T-cell (primary cell): ENCODE measurements at regions of chrX and their contacts with region 1.

Region 1: DNA sequence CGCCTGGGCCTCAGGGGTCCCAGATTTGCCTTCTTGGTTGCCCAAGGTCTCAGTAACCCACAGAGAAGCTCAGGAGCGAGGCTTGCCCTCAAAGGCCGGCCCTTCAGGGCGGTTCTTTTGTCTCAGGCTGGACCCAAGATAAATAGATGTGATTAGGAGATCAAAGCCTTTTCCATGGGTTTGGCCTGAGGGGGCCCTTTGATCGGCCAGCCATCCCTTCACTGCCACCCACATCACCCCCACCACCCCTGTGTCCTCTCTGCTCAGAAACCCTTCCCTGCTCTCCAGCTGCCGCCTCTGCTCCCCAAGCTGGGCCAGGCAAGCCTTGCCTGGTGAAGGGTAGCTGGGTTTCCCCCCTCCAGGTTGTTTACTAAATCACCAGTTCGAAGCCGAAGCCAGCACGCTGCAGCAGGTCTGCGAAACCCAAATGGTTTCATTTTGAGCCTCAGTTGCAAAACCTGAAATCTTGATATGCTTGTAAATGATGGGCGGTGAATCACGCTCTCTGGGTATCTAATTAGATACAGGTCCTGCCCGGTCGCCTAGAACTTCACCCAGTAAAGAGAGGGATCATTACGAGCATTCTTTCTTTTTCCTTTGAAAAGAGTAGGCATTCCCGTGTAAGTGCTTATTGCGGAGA is 202.6 kb upstream of the BCOR start:
- DNase-seq: peak in 1 of 35 experiments; percentile 8
- ATAC-seq: no peak
- H3K4me3 ChIP-seq: no peak overlapping the region
- H3K4me3 Mint-ChIP-seq: peak overlapping the region in 1 of 3 donors; percentile 37
- H3K27ac ChIP-seq: no peak overlapping the region
- H3K27ac Mint-ChIP-seq: peak overlapping the region in 1 of 2 donors; percentile 11
- H3K4me1 ChIP-seq: peaks cover 2 to 20% of the 10 kb centered on the region in 2 experiments
- H3K4me1 Mint-ChIP-seq: peaks cover 0 to 22% (median 11%) of the 10 kb centered on the region in 3 donors
- H3K27me3 ChIP-seq: peaks cover 0 to 9% of the 10 kb centered on the region in 2 experiments
- H3K27me3 Mint-ChIP-seq: peaks cover 0 to 43% of the 10 kb centered on the region in 2 donors

Region 2: GRCh38 chrX:39309018-39309635 is 991.3 kb before region 1 on chrX:
- CTCF ChIA-PET with region 1: no interaction called
- POLR2A ChIA-PET with region 1: interaction called in 1 of 2 experiments, 13 read pairs
- DNase-seq: peak in 24 of 35 experiments; percentile 3 to 66 (median 27)
- ATAC-seq: peak; percentile 32 to 85 (median 46)
- H3K4me3 ChIP-seq: no peak overlapping the region
- H3K4me3 Mint-ChIP-seq: peak overlapping the region in 1 of 3 donors; percentile 72
- H3K27ac ChIP-seq: peak overlapping the region; percentile 93
- H3K27ac Mint-ChIP-seq: peak overlapping the region; percentile 89 to 100
- H3K4me1 ChIP-seq: peaks cover 20 to 48% of the 10 kb centered on the region in 2 experiments
- H3K4me1 Mint-ChIP-seq: peaks cover 66 to 79% (median 76%) of the 10 kb centered on the region in 3 donors
- H3K27me3 ChIP-seq: no peaks in the 10 kb centered on the region
- H3K27me3 Mint-ChIP-seq: peaks cover 0 to 12% of the 10 kb centered on the region in 2 donors

Region 3: DNA sequence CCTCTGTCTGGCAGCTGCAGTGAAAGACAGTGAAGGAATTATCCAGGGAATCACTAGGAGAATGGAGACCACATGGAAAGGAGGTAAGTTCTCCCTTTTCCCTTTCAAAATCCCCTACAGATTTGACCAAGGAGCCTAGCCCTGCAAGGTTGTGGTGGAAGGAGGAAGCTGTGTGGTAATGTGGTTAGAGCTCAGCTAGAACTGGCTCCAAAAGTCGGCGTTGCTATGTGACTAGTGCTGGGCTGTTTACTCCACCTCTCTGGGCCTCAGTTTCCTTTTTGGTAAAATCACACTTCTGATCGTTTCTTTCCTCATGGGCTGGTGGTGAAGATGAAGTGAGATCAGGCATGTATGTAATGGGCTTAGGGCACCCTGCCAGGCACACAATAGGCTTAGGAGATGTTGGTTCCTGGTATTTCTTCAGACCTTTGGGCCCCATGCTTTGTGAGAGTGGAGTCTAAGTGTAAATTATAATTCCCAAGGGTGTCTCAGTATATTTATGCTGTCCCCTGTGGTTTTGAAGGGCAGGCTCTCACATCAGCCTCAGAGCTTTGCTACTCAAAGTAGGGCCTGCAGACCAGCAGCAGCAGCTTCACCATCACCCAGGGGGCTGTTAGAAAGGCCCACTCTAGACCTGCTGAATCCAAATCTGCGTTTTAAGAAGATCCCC is 18.9 kb before region 1 on chrX:
- CTCF ChIA-PET with region 1: no interaction called
- POLR2A ChIA-PET with region 1: no interaction called
- DNase-seq: peak in 5 of 35 experiments; percentile 2 to 53 (median 10)
- ATAC-seq: peak in 2 of 4 experiments; percentile 43 to 62
- H3K4me3 ChIP-seq: no peak overlapping the region
- H3K4me3 Mint-ChIP-seq: peak overlapping the region in 1 of 3 donors; percentile 9
- H3K27ac ChIP-seq: no peak overlapping the region
- H3K27ac Mint-ChIP-seq: no peak overlapping the region
- H3K4me1 ChIP-seq: peaks cover 4 to 37% of the 10 kb centered on the region in 2 experiments
- H3K4me1 Mint-ChIP-seq: peaks cover 20 to 40% (median 31%) of the 10 kb centered on the region in 3 donors
- H3K27me3 ChIP-seq: no peaks in the 10 kb centered on the region
- H3K27me3 Mint-ChIP-seq: peaks cover 0 to 11% of the 10 kb centered on the region in 2 donors

Region 4: GRCh38 chrX:40318801-40319200 is 18.4 kb after region 1 on chrX:
- CTCF ChIA-PET with region 1: no interaction called
- POLR2A ChIA-PET with region 1: no interaction called
- DNase-seq: no peak
- ATAC-seq: no peak
- H3K4me3 ChIP-seq: no peak overlapping the region
- H3K4me3 Mint-ChIP-seq: no peak overlapping the region
- H3K27ac ChIP-seq: no peak overlapping the region
- H3K27ac Mint-ChIP-seq: no peak overlapping the region
- H3K4me1 ChIP-seq: no peaks in the 10 kb centered on the region
- H3K4me1 Mint-ChIP-seq: no peaks in the 10 kb centered on the region
- H3K27me3 ChIP-seq: peaks cover 0 to 5% of the 10 kb centered on the region in 2 experiments
- H3K27me3 Mint-ChIP-seq: peaks cover 0 to 15% of the 10 kb centered on the region in 2 donors